ENCODE measurements at regions of chr1 and their contacts with region 1.

Region 1: GRCh38 chr1:8026153-8026975 is at the start of gene ERRFI1:
- DNase-seq: peak; percentile 77 to 98
- H3K4me3 ChIP-seq: peak within 1 kb of the TSS; percentile 57 to 85 (median 66)
- H3K27ac ChIP-seq: no peak within 1 kb of the TSS
- H3K4me1 ChIP-seq: peaks cover 11 to 25% (median 20%) of the 10 kb centered on the region in 4 experiments
- H3K27me3 ChIP-seq: peaks cover 0 to 8% (median 6%) of the 10 kb centered on the region in 4 experiments; a peak in 5 of 7 replicates
- CTCF ChIP-seq: no peak
- EP300 ChIP-seq: peak; percentile 16 to 74
- POLR2A ChIP-seq: peak; percentile 96 to 97
- RAD21 ChIP-seq: no peak
- total RNA-seq, gene ERRFI1: 46.1 TPM in 2 replicates

Region 2: DNA sequence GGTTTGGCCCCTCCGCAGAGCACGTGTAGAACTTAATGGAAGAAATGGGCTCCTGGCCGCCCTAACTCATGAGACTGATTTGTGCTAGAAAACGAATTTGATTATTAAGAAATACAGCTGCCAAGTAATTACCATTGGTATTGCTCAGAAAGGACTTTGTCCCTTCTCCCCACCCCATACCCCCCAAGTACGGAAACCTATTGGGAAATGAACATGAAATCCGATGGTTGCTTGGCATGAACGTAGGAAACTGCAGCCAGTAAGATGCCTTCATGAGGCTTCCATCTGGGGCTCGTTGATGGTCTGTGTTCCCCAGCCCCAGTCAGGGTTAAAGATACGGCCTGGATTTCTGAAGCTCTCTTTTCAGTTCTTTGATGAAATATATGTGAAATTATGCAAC is 220.9 kb before region 1 on chr1:
- CTCF ChIA-PET with region 1: no interaction called
- POLR2A ChIA-PET with region 1: no interaction called
- DNase-seq: no peak
- H3K4me3 ChIP-seq: no peak overlapping the region
- H3K27ac ChIP-seq: no peak overlapping the region
- H3K4me1 ChIP-seq: no peaks in the 10 kb centered on the region
- H3K27me3 ChIP-seq: no peaks in the 10 kb centered on the region
- CTCF ChIP-seq: no peak
- EP300 ChIP-seq: no peak
- POLR2A ChIP-seq: no peak
- RAD21 ChIP-seq: no peak

Region 3: GRCh38 chr1:8040586-8040985 is 14.2 kb after region 1 on chr1:
- CTCF ChIA-PET with region 1: interaction called, 12 read pairs
- POLR2A ChIA-PET with region 1: no interaction called
- DNase-seq: no peak
- H3K4me3 ChIP-seq: no peak overlapping the region
- H3K27ac ChIP-seq: no peak overlapping the region
- H3K4me1 ChIP-seq: no peaks in the 10 kb centered on the region
- H3K27me3 ChIP-seq: no peaks in the 10 kb centered on the region
- CTCF ChIP-seq: no peak
- EP300 ChIP-seq: no peak
- POLR2A ChIP-seq: no peak
- RAD21 ChIP-seq: no peak

Region 4: GRCh38 chr1:8307628-8308027 is 281.3 kb after region 1 on chr1:
- CTCF ChIA-PET with region 1: interaction called, 72 read pairs
- POLR2A ChIA-PET with region 1: no interaction called
- DNase-seq: no peak
- H3K4me3 ChIP-seq: no peak overlapping the region
- H3K27ac ChIP-seq: no peak overlapping the region
- H3K4me1 ChIP-seq: no peaks in the 10 kb centered on the region
- H3K27me3 ChIP-seq: no peaks in the 10 kb centered on the region
- CTCF ChIP-seq: no peak
- EP300 ChIP-seq: no peak
- POLR2A ChIP-seq: no peak
- RAD21 ChIP-seq: no peak